ENCODE measurements at regions of chr12 and their contacts with region 1.

Region 1: GRCh38 chr12:81450920-81451739 is 308.0 kb downstream of the PPFIA2 start:
- ATAC-seq: peak in 5 of 8 experiments; percentile 41 to 96 (median 91)
- H3K4me3 ChIP-seq: no peak overlapping the region
- H3K27ac ChIP-seq: no peak overlapping the region
- H3K4me1 ChIP-seq: no peaks in the 10 kb centered on the region

Region 2: GRCh38 chr12:81610955-81611889 is 160.1 kb after region 1 on chr12:
- in situ Hi-C with region 1: loop called in 1 of 9 experiments (anchors 25 kb)
- ATAC-seq: peak in 4 of 8 experiments; percentile 18 to 76 (median 62)
- H3K4me3 ChIP-seq: no peak overlapping the region
- H3K27ac ChIP-seq: no peak overlapping the region
- H3K4me1 ChIP-seq: no peaks in the 10 kb centered on the region

Region 3: DNA sequence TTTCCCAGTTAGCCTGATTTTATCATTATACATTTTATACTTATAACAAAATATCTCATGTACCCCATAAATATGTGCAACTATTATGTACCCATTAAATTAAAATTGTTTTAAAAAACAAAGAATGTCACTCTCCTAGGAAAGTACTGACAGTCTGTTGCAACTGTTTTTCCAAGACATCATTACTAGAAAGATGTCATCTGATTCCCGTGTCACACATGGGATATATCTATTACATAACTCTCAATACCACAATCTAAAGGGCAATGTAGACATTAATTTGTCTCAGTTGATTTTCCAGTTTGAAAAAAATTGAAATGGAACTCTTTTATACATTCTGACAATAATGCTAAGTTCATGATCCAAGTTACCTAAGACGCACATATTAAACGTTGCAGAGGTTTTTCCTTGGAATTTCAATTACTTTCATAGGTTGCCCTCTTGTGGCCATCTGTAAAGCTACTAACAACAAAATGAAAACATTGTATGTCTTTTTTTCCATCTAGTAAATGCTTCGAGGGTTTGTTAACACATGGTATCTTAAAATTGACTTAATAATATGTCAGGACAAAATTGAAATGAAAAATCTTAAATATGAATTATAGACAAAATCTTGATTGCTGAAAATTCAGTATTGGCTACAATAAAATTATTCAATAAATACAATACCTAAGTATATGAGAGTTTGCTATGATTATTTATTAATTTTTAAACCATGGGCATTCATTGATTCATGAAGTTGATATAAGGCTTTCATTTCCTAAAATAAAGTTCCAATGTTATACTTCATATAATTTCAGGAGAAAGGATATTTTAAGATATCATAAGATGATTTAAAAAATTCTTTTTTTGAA is 176.4 kb after region 1 on chr12:
- in situ Hi-C with region 1: loop called in 2 of 9 experiments (anchors 10 to 25 kb)
- ATAC-seq: peak in 3 of 8 experiments; percentile 37 to 59 (median 48)
- H3K4me3 ChIP-seq: no peak overlapping the region
- H3K27ac ChIP-seq: no peak overlapping the region
- H3K4me1 ChIP-seq: no peaks in the 10 kb centered on the region